ENCODE measurements at regions of chr12 and their contacts with region 1.

Region 1: DNA sequence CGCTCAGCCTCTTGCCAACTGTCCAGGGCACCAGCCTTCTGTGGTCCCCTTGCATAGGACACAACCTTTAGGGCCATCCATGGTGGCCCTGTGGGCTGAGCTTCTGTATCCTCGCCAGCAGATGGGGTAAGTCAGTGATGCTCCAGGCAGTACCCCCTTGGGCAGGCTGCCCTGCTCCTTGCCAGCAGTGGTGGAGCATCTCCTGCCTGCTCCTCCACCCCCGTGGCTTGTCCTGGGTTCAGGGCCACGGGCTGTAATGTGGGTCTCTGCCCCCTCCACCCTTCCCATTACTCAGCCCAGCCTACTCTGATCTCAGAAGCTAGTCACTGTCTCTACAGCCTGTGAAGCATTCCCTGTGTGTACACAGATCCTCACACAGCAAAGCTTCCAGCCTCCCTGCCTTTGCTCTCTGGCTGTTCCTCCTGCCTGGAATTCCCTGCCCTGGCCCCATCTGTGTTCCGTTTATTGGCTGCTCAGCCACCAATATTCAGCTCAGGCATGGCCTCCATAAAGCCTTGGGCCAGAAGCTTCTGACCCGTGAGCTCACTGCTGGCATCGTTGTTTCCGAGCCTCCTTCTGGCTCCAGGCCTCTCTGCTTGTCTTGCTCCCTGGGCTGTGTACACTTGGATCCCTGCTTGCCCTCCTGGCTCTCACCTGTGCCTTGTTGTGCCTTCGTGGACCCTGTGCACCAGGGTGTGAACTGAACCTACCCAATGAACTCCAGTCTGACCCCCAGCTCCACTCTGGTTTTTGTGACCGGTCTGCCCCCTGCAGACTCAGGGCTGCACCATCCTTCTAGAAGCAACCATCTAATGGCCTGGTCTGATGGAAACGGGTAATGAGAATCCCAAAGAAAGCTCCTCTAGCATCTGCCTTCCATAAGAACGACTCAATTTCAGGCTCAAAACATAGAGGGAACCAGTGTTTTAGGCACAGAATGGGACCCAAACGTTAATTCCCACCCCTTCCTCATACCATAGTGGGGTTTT is 177.0 kb upstream of the PRMT8 start:
- DNase-seq: no peak
- ATAC-seq: peak; percentile 58
- H3K4me3 Mint-ChIP-seq: no peak overlapping the region
- H3K27ac Mint-ChIP-seq: no peak overlapping the region
- H3K4me1 Mint-ChIP-seq: no peaks in the 10 kb centered on the region
- H3K27me3 Mint-ChIP-seq: peaks cover 8% of the 10 kb centered on the region
- CTCF ChIP-seq: no peak

Region 2: DNA sequence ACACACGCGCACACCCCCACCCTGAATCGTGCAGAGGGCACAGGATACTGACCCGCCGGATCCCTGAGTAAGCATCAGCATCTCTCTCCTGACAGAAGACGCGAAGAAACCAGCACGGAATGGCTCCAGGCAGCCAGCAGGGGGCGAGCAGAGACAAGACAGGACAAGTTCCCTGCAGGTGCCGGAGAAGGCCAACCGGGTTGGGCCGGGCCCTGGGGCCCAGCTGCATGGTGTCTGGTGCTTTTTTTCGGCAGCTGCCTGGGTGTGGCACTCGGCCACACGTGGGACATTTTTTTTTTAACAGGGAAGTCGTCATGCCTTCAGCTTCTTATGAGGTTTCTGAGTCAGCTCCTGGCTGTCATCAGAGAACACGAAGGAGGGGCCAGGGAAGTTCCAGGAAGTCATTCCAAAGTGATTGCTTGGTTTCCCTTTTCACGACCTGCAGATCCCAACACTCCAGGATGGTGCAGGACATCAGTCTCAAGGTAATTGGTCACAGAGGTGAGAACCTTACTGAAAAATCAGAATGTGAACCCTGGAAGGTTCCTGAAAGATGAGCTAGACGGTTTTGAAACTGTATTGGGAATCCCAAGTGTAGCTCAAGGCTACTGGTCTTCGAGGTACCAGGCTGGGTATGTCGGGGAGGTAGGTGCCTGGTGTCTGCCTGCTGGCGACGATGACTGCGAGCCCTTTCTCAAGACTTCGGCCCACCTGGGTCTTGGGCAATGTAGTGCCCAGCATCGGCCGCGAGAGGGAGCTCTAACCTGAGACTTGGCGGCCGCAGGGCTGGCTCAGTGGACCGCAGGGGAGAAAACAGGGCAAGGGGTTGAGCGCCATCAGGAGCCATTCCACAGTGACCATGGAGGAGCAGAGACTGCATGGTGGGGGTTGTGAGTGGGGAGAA is 13.8 kb before region 1 on chr12:
- CTCF ChIA-PET with region 1: interaction called, 21 read pairs
- POLR2A ChIA-PET with region 1: no interaction called
- intact Hi-C with region 1: no loop called
- DNase-seq: peak; percentile 63
- ATAC-seq: peak; percentile 85
- H3K4me3 Mint-ChIP-seq: peak overlapping the region; percentile 74
- H3K27ac Mint-ChIP-seq: peak overlapping the region; percentile 73
- H3K4me1 Mint-ChIP-seq: peaks cover 11% of the 10 kb centered on the region
- H3K27me3 Mint-ChIP-seq: peaks cover 25% of the 10 kb centered on the region
- CTCF ChIP-seq: peak; percentile 37

Region 3: DNA sequence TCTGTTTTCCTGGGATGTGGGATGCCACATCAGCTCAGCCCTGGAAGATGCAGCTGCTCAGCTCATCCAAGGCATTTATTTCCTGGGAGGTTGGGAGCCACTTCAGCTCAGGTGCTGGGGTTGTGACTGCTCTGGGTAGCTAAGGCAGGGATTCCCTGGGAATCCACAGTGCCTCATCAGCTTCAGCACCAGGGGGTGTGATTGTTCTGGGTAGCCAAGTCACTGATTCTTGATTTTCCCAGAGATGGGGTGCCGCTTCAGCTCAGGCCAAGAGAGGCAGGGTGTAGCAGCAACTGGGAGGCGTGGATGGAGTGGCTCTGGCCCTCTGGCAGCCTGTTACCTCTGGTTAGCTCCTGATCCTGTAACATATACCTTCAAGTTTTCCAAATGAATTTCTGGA is 95.7 kb after region 1 on chr12:
- CTCF ChIA-PET with region 1: no interaction called
- POLR2A ChIA-PET with region 1: no interaction called
- intact Hi-C with region 1: no loop called
- DNase-seq: no peak
- ATAC-seq: no peak
- H3K4me3 Mint-ChIP-seq: no peak overlapping the region
- H3K27ac Mint-ChIP-seq: no peak overlapping the region
- H3K4me1 Mint-ChIP-seq: no peaks in the 10 kb centered on the region
- H3K27me3 Mint-ChIP-seq: peaks cover 3% of the 10 kb centered on the region
- CTCF ChIP-seq: no peak

Measured in activated B cell treated with CpG ODN at 0.5 μM for 24 hours (primary cell).